ENCODE measurements at regions of chr14 and their contacts with region 1.

Region 1: GRCh38 chr14:72023722-72024407 is 91.6 kb downstream of the RGS6 start:
- DNase-seq: peak in 1 of 2 experiments; percentile 13
- H3K4me3 ChIP-seq: no peak overlapping the region
- H3K4me3 Mint-ChIP-seq: no peak overlapping the region
- H3K27ac Mint-ChIP-seq: no peak overlapping the region
- H3K4me1 ChIP-seq: no peaks in the 10 kb centered on the region
- H3K4me1 Mint-ChIP-seq: no peaks in the 10 kb centered on the region
- H3K27me3 ChIP-seq: no peaks in the 10 kb centered on the region
- H3K27me3 Mint-ChIP-seq: peaks cover 15% of the 10 kb centered on the region
- CTCF ChIP-seq: peak; percentile 19 to 50

Region 2: DNA sequence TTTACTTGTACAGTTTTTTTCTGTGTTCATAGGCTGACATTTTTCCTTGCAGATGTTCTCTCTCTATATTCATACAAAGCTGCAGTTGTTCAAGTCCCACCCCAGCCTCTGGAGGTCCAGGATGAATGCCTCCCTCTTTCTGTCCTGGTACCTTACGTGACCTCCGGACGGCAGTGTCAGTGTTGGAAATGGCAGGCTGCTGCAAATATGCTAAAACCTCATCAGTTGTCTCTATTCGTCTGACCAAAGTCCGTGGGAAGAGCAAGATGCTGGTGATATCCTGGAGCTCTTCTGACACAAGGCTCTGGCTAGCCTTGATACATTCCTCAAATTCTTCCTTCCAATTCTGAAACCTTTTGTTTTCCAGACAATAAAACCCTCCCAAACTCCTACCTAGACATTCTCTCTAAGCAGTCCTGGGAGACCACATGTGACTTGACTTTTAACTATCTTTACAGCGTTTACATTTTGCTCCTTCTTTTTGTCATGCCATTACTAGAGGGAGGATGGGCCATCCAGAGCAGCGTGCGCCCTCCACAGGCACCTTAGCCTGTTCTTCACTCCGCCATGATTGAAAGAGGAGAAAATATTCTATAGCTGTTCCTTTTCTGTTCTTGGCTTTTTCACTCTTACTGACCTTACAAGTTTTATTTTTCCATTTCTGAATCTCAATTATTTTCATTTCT is 51.9 kb after region 1 on chr14:
- CTCF ChIA-PET with region 1: no interaction called
- POLR2A ChIA-PET with region 1: no interaction called
- intact Hi-C with region 1: loop called (anchors 5 kb)
- DNase-seq: peak; percentile 34 to 48
- H3K4me3 ChIP-seq: no peak overlapping the region
- H3K4me3 Mint-ChIP-seq: no peak overlapping the region
- H3K27ac Mint-ChIP-seq: no peak overlapping the region
- H3K4me1 ChIP-seq: no peaks in the 10 kb centered on the region
- H3K4me1 Mint-ChIP-seq: peaks cover 8% of the 10 kb centered on the region
- H3K27me3 ChIP-seq: no peaks in the 10 kb centered on the region
- H3K27me3 Mint-ChIP-seq: peaks cover 3% of the 10 kb centered on the region
- CTCF ChIP-seq: no peak

Region 3: GRCh38 chr14:72291908-72292688 is 268.2 kb after region 1 on chr14:
- CTCF ChIA-PET with region 1: no interaction called
- POLR2A ChIA-PET with region 1: no interaction called
- intact Hi-C with region 1: loop called (anchors 5 kb)
- DNase-seq: peak in 1 of 2 experiments; percentile 52
- H3K4me3 ChIP-seq: no peak overlapping the region
- H3K4me3 Mint-ChIP-seq: no peak overlapping the region
- H3K27ac Mint-ChIP-seq: no peak overlapping the region
- H3K4me1 ChIP-seq: no peaks in the 10 kb centered on the region; the same call in 1 of the 2 replicates
- H3K4me1 Mint-ChIP-seq: no peaks in the 10 kb centered on the region
- H3K27me3 ChIP-seq: no peaks in the 10 kb centered on the region
- H3K27me3 Mint-ChIP-seq: peaks cover 9% of the 10 kb centered on the region
- CTCF ChIP-seq: peak; percentile 54 to 69

Region 4: DNA sequence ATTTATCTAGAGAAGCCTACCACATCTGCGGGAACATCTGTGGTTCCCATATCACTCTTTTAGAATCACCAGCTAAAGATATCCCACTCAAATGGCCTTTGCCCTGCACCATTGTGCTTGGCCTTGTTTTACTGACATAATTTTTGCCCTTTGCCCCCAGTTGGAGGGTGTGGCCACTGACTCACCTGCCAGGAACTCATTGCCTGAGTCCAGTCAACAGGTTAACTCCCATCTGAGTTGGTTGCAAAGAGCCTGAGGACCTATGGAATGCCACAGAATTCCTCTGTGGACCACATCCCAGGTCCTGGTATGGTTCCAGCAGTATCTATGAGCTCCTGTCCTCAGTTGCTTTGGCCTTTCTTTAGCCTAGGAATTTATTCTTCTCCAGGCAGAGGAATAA is 1772.1 kb after region 1 on chr14:
- CTCF ChIA-PET with region 1: interaction called, 12 read pairs
- POLR2A ChIA-PET with region 1: no interaction called
- intact Hi-C with region 1: no loop called
- DNase-seq: peak; percentile 92 to 96
- H3K4me3 ChIP-seq: no peak overlapping the region
- H3K4me3 Mint-ChIP-seq: no peak overlapping the region
- H3K27ac Mint-ChIP-seq: peak overlapping the region; percentile 56
- H3K4me1 ChIP-seq: peaks cover 49% of the 10 kb centered on the region
- H3K4me1 Mint-ChIP-seq: peaks cover 46% of the 10 kb centered on the region
- H3K27me3 ChIP-seq: no peaks in the 10 kb centered on the region
- H3K27me3 Mint-ChIP-seq: no peaks in the 10 kb centered on the region
- CTCF ChIP-seq: no peak